ENCODE measurements at regions of chr9 and their contacts with region 1.

Region 1: GRCh38 chr9:122350638-122351355 is 20.0 kb upstream of the PTGS1 start:
- DNase-seq: peak; percentile 89
- H3K4me3 ChIP-seq: peak overlapping the region in 1 of 2 experiments; percentile 31; a peak in 1 of 4 replicates
- H3K27ac ChIP-seq: no peak overlapping the region
- H3K4me1 ChIP-seq: peaks cover 0 to 6% of the 10 kb centered on the region in 2 experiments; a peak in 1 of 4 replicates
- H3K27me3 ChIP-seq: no peaks in the 10 kb centered on the region
- CTCF ChIP-seq: peak; percentile 91
- EP300 ChIP-seq: no peak
- RAD21 ChIP-seq: peak; percentile 99

Region 2: DNA sequence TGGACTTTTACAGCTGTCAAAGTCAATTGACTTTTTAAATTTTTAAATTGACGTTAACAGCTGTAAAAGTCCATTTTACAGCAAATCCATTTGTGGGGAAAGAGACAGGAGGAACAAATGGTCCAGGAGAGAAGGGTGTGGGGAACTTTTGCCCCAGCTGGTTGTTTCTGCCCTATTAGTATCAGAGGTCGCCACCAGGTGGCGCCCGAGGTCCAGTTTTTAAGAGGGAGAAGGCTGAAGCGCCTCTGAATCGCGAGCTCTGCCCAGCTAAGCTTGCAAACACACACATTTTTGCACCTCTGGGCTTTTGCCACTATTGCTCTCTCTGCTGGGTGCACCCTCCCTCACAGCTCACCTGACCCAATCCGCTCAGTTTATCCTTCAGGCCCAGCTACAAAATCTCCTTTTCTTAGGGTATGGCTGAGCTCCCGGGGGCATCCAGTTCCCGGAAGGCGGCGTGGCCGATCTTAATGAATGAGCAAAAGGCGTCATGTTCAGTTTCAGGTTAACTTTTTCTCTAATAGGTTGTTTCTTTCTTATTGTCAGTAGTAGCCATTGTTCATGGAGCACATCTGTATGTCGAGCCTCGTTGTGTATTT is 251.4 kb before region 1 on chr9:
- CTCF ChIA-PET with region 1: interaction called, 144 read pairs
- POLR2A ChIA-PET with region 1: no interaction called
- DNase-seq: peak; percentile 80
- H3K4me3 ChIP-seq: peak overlapping the region in 1 of 2 experiments; percentile 35; a peak in 1 of 4 replicates
- H3K27ac ChIP-seq: no peak overlapping the region
- H3K4me1 ChIP-seq: no peaks in the 10 kb centered on the region
- H3K27me3 ChIP-seq: no peaks in the 10 kb centered on the region
- CTCF ChIP-seq: peak; percentile 76
- EP300 ChIP-seq: no peak
- RAD21 ChIP-seq: peak; percentile 87

Region 3: GRCh38 chr9:122125158-122125508 is 225.7 kb before region 1 on chr9:
- CTCF ChIA-PET with region 1: interaction called, 528 read pairs
- POLR2A ChIA-PET with region 1: interaction called, 8 read pairs
- DNase-seq: peak; percentile 92
- H3K4me3 ChIP-seq: peak overlapping the region in 1 of 2 experiments; percentile 37; a peak in 1 of 4 replicates
- H3K27ac ChIP-seq: no peak overlapping the region
- H3K4me1 ChIP-seq: peaks cover 6 to 8% of the 10 kb centered on the region in 2 experiments; a peak in 2 of 4 replicates
- H3K27me3 ChIP-seq: no peaks in the 10 kb centered on the region
- CTCF ChIP-seq: peak; percentile 94
- EP300 ChIP-seq: no peak
- RAD21 ChIP-seq: peak; percentile 96

Region 4: DNA sequence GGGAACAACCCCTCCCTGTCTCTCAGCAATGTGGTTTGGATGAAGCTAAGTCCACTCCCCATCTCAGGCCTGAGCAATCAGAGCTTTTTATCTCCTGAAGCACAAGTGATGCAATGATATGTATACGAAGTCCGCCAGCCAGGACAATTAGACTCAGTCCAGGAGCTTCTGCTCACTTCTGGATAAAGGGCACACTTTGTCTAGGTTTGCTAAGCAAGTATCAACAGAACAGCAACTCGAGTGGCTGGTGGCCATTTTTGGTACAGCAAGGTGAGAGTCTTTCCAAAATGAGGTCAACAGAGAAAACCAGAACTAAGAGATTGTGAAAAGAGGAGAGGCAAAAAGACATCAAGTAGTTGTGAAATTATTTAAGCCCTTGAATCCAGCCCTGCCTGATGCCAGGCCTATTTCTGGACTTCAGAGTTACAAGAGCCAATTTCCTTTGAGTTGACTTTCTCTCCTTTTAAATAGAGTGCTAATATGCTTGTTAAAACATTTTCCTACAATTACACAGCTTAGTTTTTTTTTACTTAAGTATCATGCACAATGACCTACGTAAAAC is 199.4 kb before region 1 on chr9:
- CTCF ChIA-PET with region 1: interaction called, 15 read pairs
- POLR2A ChIA-PET with region 1: no interaction called
- DNase-seq: no peak
- H3K4me3 ChIP-seq: no peak overlapping the region
- H3K27ac ChIP-seq: no peak overlapping the region
- H3K4me1 ChIP-seq: no peaks in the 10 kb centered on the region
- H3K27me3 ChIP-seq: no peaks in the 10 kb centered on the region
- CTCF ChIP-seq: no peak
- EP300 ChIP-seq: no peak
- RAD21 ChIP-seq: no peak

Region 5: DNA sequence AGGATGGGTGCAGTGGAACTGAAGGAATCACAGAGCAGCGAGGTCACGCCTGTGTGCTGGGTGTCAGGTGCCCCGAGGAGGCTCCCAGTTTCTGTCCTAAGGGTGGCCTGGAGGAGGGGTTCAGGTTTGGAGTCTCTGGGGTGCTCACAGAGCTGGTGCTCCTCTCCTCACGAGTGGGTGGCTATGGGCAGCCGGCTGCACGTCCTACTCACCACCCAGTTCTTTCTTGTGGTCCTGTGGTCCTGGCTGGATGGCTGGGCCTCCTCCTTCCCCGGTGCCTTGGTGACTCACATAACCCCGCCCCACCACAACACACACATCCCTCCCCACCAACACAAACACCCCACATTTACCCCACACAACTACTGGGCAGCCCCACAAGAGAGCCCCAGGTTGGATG is 10.1 kb after region 1 on chr9:
- CTCF ChIA-PET with region 1: interaction called, 19 read pairs
- POLR2A ChIA-PET with region 1: no interaction called
- DNase-seq: no peak
- H3K4me3 ChIP-seq: no peak overlapping the region
- H3K27ac ChIP-seq: no peak overlapping the region
- H3K4me1 ChIP-seq: peaks cover 0 to 7% of the 10 kb centered on the region in 2 experiments; a peak in 1 of 4 replicates
- H3K27me3 ChIP-seq: no peaks in the 10 kb centered on the region
- CTCF ChIP-seq: no peak
- EP300 ChIP-seq: no peak
- RAD21 ChIP-seq: no peak